CD4-positive, alpha-beta T cell (primary cell): ENCODE measurements at regions of chr9 and their contacts with region 1.

Region 1: GRCh38 chr9:25421560-25421959 is 256.7 kb downstream of the TUSC1 start:
- DNase-seq: no peak
- ATAC-seq: no peak
- H3K4me3 ChIP-seq: no peak overlapping the region
- H3K4me3 Mint-ChIP-seq: no peak overlapping the region
- H3K27ac ChIP-seq: no peak overlapping the region
- H3K27ac Mint-ChIP-seq: no peak overlapping the region
- H3K4me1 ChIP-seq: no peaks in the 10 kb centered on the region
- H3K4me1 Mint-ChIP-seq: no peaks in the 10 kb centered on the region
- H3K27me3 ChIP-seq: no peaks in the 10 kb centered on the region
- H3K27me3 Mint-ChIP-seq: no peaks in the 10 kb centered on the region
- CTCF ChIP-seq: no peak

Region 2: DNA sequence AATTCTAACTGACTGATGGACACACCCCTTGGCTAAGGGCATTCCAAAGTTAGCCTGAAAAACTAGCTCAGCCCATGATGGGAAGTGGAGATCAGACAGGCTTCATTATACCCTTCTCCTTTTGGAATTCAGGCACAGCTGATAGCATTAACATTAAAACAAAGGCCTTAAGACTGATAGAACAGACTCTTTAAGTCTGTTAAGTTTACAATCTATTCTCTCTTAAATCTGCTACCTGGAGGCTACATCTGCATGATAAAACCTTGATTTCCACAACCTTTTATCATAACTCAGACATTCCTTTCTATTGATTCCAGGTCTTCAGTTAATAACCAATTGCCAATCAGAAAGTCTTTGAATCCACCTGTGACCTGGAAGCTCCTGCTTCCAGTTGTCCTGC is 24.7 kb before region 1 on chr9:
- CTCF ChIA-PET with region 1: no interaction called
- POLR2A ChIA-PET with region 1: no interaction called
- intact Hi-C with region 1: loop called in 1 of 2 experiments (anchors 2 kb)
- DNase-seq: no peak
- ATAC-seq: no peak
- H3K4me3 ChIP-seq: no peak overlapping the region
- H3K4me3 Mint-ChIP-seq: no peak overlapping the region
- H3K27ac ChIP-seq: no peak overlapping the region
- H3K27ac Mint-ChIP-seq: no peak overlapping the region
- H3K4me1 ChIP-seq: no peaks in the 10 kb centered on the region
- H3K4me1 Mint-ChIP-seq: no peaks in the 10 kb centered on the region
- H3K27me3 ChIP-seq: no peaks in the 10 kb centered on the region
- H3K27me3 Mint-ChIP-seq: no peaks in the 10 kb centered on the region
- CTCF ChIP-seq: no peak

Region 3: GRCh38 chr9:25442526-25442925 is 21.0 kb after region 1 on chr9:
- CTCF ChIA-PET with region 1: no interaction called
- POLR2A ChIA-PET with region 1: no interaction called
- intact Hi-C with region 1: no loop called
- DNase-seq: no peak
- ATAC-seq: no peak
- H3K4me3 ChIP-seq: no peak overlapping the region
- H3K4me3 Mint-ChIP-seq: no peak overlapping the region
- H3K27ac ChIP-seq: no peak overlapping the region
- H3K27ac Mint-ChIP-seq: no peak overlapping the region
- H3K4me1 ChIP-seq: no peaks in the 10 kb centered on the region
- H3K4me1 Mint-ChIP-seq: no peaks in the 10 kb centered on the region
- H3K27me3 ChIP-seq: no peaks in the 10 kb centered on the region
- H3K27me3 Mint-ChIP-seq: no peaks in the 10 kb centered on the region
- CTCF ChIP-seq: no peak

Region 4: DNA sequence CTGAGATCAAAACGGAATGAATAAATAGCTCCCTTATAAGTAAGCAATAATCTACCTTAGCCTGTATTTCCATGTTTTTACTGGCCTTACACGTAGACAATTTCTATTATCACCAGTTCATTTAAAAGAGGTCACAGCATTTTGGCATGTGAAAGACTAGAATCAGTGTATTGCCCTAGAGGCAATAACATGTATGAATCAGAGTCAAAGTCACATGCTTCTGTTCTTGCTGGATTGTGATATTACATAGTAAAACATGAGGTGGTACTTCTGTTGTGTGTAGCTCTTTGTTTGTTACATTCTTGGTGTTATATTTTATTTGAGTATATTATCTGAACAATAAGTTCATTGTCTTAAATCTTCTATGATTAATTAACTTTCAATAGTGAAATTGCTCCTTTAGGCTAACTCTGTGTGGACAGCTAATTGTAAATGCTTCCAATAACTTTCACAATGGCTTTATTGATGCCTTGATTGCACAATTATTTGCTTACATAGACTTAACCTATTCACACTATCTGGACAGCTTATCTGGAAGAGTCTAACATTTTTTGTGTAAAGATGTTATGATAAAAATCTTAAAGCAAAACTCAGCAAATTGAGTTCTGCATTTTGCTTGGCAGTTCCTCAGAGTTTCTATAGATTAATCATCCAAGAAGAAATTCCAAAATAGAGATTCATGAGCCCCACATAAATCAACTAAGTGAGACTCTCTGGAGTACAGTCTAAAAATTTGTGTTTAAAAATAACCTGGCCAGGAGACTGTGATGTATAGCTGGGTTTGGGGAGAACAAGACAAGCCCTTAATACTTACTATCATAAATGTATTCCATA is 496.2 kb after region 1 on chr9:
- CTCF ChIA-PET with region 1: no interaction called
- POLR2A ChIA-PET with region 1: no interaction called
- intact Hi-C with region 1: no loop called
- DNase-seq: no peak
- ATAC-seq: no peak
- H3K4me3 ChIP-seq: no peak overlapping the region
- H3K4me3 Mint-ChIP-seq: no peak overlapping the region
- H3K27ac ChIP-seq: no peak overlapping the region
- H3K27ac Mint-ChIP-seq: no peak overlapping the region
- H3K4me1 ChIP-seq: no peaks in the 10 kb centered on the region
- H3K4me1 Mint-ChIP-seq: no peaks in the 10 kb centered on the region
- H3K27me3 ChIP-seq: no peaks in the 10 kb centered on the region
- H3K27me3 Mint-ChIP-seq: no peaks in the 10 kb centered on the region
- CTCF ChIP-seq: no peak